ENCODE measurements at regions of chr11 and their contacts with region 1.

Region 1: GRCh38 chr11:65859200-65859811 is 927 bp upstream of the MUS81 start:
- DNase-seq: peak; percentile 90
- ATAC-seq: peak; percentile 78
- H3K4me3 ChIP-seq: peak overlapping the region; percentile 85
- H3K27ac ChIP-seq: peak overlapping the region; percentile 100
- H3K4me1 ChIP-seq: peaks cover 25% of the 10 kb centered on the region
- H3K27me3 ChIP-seq: no peaks in the 10 kb centered on the region
- CTCF ChIP-seq: no peak
- EP300 ChIP-seq: no peak
- POLR2A ChIP-seq: peak; percentile 87
- RAD21 ChIP-seq: no peak

Region 2: GRCh38 chr11:64240394-64241174 is 1618.7 kb before region 1 on chr11 and contains the start of gene FKBP2:
- CTCF ChIA-PET with region 1: no interaction called
- POLR2A ChIA-PET with region 1: no interaction called
- RAD21 ChIA-PET with region 1: no interaction called
- SMC1A ChIA-PET with region 1: no interaction called
- in situ Hi-C with region 1: loop called (anchors 25 kb)
- intact Hi-C with region 1: no loop called
- DNase-seq: peak; percentile 87
- ATAC-seq: peak; percentile 70
- H3K4me3 ChIP-seq: peak within 1 kb of the TSS; percentile 89
- H3K27ac ChIP-seq: peak within 1 kb of the TSS; percentile 92
- H3K4me1 ChIP-seq: peaks cover 42% of the 10 kb centered on the region
- H3K27me3 ChIP-seq: no peaks in the 10 kb centered on the region
- CTCF ChIP-seq: no peak
- EP300 ChIP-seq: no peak; a peak in 1 of 4 replicates
- POLR2A ChIP-seq: peak; percentile 94
- RAD21 ChIP-seq: no peak
- polyA plus RNA-seq, gene FKBP2: 1.8 to 26.8 TPM

Region 3: DNA sequence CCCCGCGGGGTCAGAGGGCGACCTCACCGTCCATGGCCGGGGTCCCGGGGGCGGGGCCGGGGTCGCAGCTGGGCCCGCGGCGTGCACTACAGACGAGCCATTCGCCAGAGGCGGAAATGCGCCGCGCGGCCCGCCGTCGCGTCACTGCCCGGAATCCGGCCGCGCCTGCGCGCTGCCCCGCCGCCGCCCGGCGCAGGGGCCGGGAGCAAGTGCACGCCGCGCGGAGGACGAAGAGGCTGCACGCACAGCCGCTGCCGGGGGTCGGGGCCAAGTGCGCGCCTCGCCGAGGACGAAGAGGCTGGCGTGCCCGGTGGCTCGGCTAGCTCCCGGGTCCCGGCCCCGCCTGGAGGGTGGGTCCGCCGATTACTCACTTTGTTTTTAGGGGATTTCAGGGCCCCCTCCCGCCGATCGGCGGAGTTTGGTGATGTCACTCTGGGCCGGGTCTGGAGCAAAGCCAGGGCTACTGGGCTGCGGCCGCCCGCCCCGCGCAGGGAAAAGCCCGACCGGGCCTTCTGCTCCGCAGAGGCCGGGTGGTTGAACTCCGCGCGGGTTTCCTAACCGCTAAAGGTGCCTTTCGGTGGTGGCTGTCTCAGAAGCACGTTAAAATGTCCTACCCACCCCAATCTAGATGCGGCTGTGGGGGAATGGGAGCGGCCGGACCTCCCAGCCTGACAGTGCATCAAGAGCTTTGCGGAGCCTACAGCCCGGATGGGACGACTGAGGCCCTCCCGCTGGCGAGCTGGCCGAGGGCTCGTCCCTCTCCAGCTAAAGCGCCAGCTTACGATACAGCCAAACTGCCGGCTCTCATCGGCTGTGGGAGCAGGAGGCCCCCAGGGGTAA is 196.3 kb before region 1 on chr11 and contains the start of gene RELA:
- CTCF ChIA-PET with region 1: interaction called, 3 read pairs
- POLR2A ChIA-PET with region 1: interaction called, 5 read pairs
- RAD21 ChIA-PET with region 1: no interaction called
- SMC1A ChIA-PET with region 1: no interaction called
- in situ Hi-C with region 1: no loop called
- intact Hi-C with region 1: loop called (anchors 1 kb)
- DNase-seq: no peak
- ATAC-seq: peak; percentile 84
- H3K4me3 ChIP-seq: peak within 1 kb of the TSS; percentile 91
- H3K27ac ChIP-seq: peak within 1 kb of the TSS; percentile 98
- H3K4me1 ChIP-seq: peaks cover 9% of the 10 kb centered on the region
- H3K27me3 ChIP-seq: no peaks in the 10 kb centered on the region
- CTCF ChIP-seq: no peak
- EP300 ChIP-seq: 0 out of 4 replicates have a peak, but pooled peaks of 1 of the 2 experiments have one; percentile 24
- POLR2A ChIP-seq: peak; percentile 79
- RAD21 ChIP-seq: no peak
- polyA plus RNA-seq, gene RELA: 5.1 to 12.8 TPM

Region 4: GRCh38 chr11:65833297-65834030 is 25.8 kb before region 1 on chr11 and contains the start of gene SNX32:
- CTCF ChIA-PET with region 1: interaction called, 6 read pairs
- POLR2A ChIA-PET with region 1: interaction called, 18 read pairs
- RAD21 ChIA-PET with region 1: interaction called, 3 read pairs
- SMC1A ChIA-PET with region 1: interaction called, 5 read pairs
- in situ Hi-C with region 1: no loop called
- intact Hi-C with region 1: no loop called
- DNase-seq: peak; percentile 73
- ATAC-seq: peak; percentile 100
- H3K4me3 ChIP-seq: peak within 1 kb of the TSS; percentile 64
- H3K27ac ChIP-seq: peak within 1 kb of the TSS; percentile 52; the same call in 1 of the 2 replicates
- H3K4me1 ChIP-seq: peaks cover 15% of the 10 kb centered on the region
- H3K27me3 ChIP-seq: peaks cover 0 to 7% of the 10 kb centered on the region in 2 experiments; a peak in 1 of 4 replicates
- CTCF ChIP-seq: no peak
- EP300 ChIP-seq: no peak
- POLR2A ChIP-seq: peak; percentile 40; the same call in 1 of the 2 replicates
- RAD21 ChIP-seq: no peak
- polyA plus RNA-seq, gene SNX32: 0.04 to 0.06 TPM

Region 5: GRCh38 chr11:65873318-65874156 is 14.2 kb after region 1 on chr11:
- CTCF ChIA-PET with region 1: interaction called, 41 read pairs
- POLR2A ChIA-PET with region 1: interaction called, 44 read pairs
- RAD21 ChIA-PET with region 1: interaction called, 13 read pairs
- SMC1A ChIA-PET with region 1: interaction called, 13 read pairs
- in situ Hi-C with region 1: no loop called
- intact Hi-C with region 1: no loop called
- DNase-seq: peak; percentile 87
- ATAC-seq: peak; percentile 89
- H3K4me3 ChIP-seq: peak overlapping the region; percentile 87
- H3K27ac ChIP-seq: peak overlapping the region; percentile 51
- H3K4me1 ChIP-seq: peaks cover 11% of the 10 kb centered on the region
- H3K27me3 ChIP-seq: no peaks in the 10 kb centered on the region
- CTCF ChIP-seq: no peak
- EP300 ChIP-seq: no peak
- POLR2A ChIP-seq: peak; percentile 83
- RAD21 ChIP-seq: no peak

Region 6: DNA sequence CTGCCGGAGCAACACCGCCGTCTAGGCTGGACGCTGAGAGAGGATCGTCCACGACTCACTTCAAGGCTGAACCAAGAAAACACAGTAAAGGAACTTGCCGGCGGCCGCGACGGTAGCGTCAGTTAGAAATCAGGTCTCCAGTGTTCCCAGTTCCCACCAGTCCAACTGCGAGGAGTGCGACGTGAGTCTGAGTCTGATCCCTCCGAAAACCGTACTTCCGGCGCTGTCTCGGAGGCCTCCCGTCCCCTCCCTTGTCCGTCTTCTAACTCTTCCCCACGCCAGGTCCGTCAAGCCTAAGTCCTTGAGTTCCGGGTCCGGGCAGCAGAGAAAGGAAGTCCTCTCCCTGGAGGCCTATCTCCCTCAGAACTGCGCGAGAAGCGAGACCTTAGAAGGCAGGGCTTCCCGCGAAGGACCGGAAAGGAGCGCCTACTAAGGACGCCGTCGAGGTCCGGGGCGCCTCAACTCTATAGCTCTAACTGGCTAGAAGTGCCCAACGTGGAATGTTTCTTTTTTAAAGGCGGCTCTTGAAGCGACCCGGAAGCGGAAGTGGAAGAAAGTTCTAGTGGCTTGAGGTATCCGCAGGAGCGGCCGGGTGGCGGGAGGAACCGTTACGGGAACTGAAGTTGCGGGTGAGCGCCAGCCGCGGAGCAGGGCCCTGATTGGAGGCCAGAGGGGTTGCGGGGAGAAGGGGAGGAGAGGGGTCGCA is 142.8 kb after region 1 on chr11 and contains the starts of genes BANF1 and EIF1AD:
- CTCF ChIA-PET with region 1: no interaction called
- POLR2A ChIA-PET with region 1: interaction called, 8 read pairs
- RAD21 ChIA-PET with region 1: interaction called, 10 read pairs
- SMC1A ChIA-PET with region 1: interaction called, 3 read pairs
- in situ Hi-C with region 1: no loop called
- intact Hi-C with region 1: loop called (anchors 1 kb)
- DNase-seq: peak; percentile 93
- ATAC-seq: peak; percentile 87
- H3K4me3 ChIP-seq: peak within 1 kb of the TSS; percentile 93
- H3K27ac ChIP-seq: peak within 1 kb of the TSS; percentile 93
- H3K4me1 ChIP-seq: peaks cover 11% of the 10 kb centered on the region
- H3K27me3 ChIP-seq: no peaks in the 10 kb centered on the region
- CTCF ChIP-seq: no peak
- EP300 ChIP-seq: no peak; a peak in 1 of 4 replicates
- POLR2A ChIP-seq: peak; percentile 96
- RAD21 ChIP-seq: no peak
- polyA plus RNA-seq, gene BANF1: 501 to 574 TPM
- polyA plus RNA-seq, gene EIF1AD: 51.5 to 56.8 TPM

Region 7: DNA sequence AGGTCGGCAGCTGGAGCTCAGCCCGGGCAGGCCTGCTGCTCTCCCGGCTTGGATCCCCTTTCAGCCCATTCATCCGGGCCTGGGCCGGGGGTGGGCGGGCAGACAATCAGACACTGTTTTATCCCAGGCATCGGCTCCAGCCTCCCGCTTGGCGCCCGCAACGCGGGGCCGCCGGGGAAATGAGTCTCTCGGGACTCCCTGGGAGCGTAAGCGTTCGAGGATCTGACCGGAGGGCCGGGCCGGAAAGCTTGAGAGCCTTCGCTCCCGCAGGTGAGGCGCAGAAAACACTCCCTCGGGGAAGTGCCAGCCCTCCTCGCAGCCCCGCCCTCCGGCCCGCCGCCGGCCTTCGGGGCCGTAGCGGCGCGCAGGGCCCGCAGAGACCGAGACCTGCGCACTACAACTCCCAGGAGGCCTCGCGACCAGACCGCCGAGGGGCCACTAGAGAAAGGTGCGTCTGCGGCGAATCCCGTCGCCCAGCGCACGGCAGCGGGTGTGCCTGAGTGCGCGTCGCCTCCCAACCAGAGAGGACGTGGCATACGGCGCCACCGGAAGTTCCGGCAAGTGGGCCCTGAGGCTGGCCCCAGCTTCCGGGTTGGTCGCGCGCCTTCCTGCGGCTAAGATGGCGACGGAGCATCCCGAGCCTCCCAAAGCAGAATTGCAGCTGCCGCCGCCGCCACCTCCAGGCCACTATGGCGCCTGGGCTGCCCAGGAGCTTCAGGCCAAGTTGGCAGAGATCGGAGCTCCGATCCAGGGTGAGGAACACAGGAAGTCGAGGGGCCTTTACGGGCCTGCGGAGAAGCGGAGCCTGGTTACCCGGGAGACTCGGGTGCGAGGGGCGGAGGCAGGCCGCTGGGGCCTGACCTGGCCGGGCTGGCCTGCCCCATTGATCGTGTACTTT is 192.7 kb after region 1 on chr11 and contains the start of gene SF3B2:
- CTCF ChIA-PET with region 1: interaction called, 6 read pairs
- POLR2A ChIA-PET with region 1: interaction called, 7 read pairs
- RAD21 ChIA-PET with region 1: no interaction called
- SMC1A ChIA-PET with region 1: interaction called, 3 read pairs
- in situ Hi-C with region 1: no loop called
- intact Hi-C with region 1: loop called (anchors 5 kb)
- DNase-seq: peak; percentile 96
- ATAC-seq: peak; percentile 98
- H3K4me3 ChIP-seq: peak within 1 kb of the TSS; percentile 98
- H3K27ac ChIP-seq: peak within 1 kb of the TSS; percentile 82
- H3K4me1 ChIP-seq: peaks cover 15% of the 10 kb centered on the region
- H3K27me3 ChIP-seq: no peaks in the 10 kb centered on the region
- CTCF ChIP-seq: no peak
- EP300 ChIP-seq: no peak
- POLR2A ChIP-seq: peak; percentile 97
- RAD21 ChIP-seq: no peak
- polyA plus RNA-seq, gene SF3B2: 56.3 to 123 TPM